ENCODE measurements at regions of chr10 and their contacts with region 1.

Region 1: GRCh38 chr10:35563261-35563891 is 41.8 kb upstream of the GJD4 start:
- DNase-seq: peak in 4 of 5 donors; percentile 50 to 60 (median 54)
- ATAC-seq: peak in 2 of 4 donors; percentile 33 to 42
- H3K4me3 ChIP-seq: no peak overlapping the region
- H3K27ac ChIP-seq: peak overlapping the region in 5 of 12 donors; percentile 9 to 70 (median 52)
- H3K4me1 ChIP-seq: peaks cover 15 to 56% (median 42%) of the 10 kb centered on the region in 12 donors
- H3K27me3 ChIP-seq: no peaks in the 10 kb centered on the region
- CTCF ChIP-seq: peak; percentile 89 to 99 (median 96)
- POLR2A ChIP-seq: no peak

Region 2: GRCh38 chr10:35246770-35247343 is 316.5 kb before region 1 on chr10:
- intact Hi-C with region 1: loop called in 3 of 10 experiments (anchors 5 to 10 kb)
- DNase-seq: no peak
- ATAC-seq: no peak
- H3K4me3 ChIP-seq: no peak overlapping the region
- H3K27ac ChIP-seq: no peak overlapping the region
- H3K4me1 ChIP-seq: no peaks in the 10 kb centered on the region
- H3K27me3 ChIP-seq: no peaks in the 10 kb centered on the region
- CTCF ChIP-seq: no peak
- POLR2A ChIP-seq: no peak

Region 3: GRCh38 chr10:35345383-35345742 is 218.0 kb before region 1 on chr10:
- intact Hi-C with region 1: no loop called
- DNase-seq: no peak
- ATAC-seq: no peak
- H3K4me3 ChIP-seq: no peak overlapping the region
- H3K27ac ChIP-seq: no peak overlapping the region
- H3K4me1 ChIP-seq: peaks cover 13 to 93% (median 79%) of the 10 kb centered on the region in 12 donors
- H3K27me3 ChIP-seq: no peaks in the 10 kb centered on the region
- CTCF ChIP-seq: no peak
- POLR2A ChIP-seq: no peak

Region 4: DNA sequence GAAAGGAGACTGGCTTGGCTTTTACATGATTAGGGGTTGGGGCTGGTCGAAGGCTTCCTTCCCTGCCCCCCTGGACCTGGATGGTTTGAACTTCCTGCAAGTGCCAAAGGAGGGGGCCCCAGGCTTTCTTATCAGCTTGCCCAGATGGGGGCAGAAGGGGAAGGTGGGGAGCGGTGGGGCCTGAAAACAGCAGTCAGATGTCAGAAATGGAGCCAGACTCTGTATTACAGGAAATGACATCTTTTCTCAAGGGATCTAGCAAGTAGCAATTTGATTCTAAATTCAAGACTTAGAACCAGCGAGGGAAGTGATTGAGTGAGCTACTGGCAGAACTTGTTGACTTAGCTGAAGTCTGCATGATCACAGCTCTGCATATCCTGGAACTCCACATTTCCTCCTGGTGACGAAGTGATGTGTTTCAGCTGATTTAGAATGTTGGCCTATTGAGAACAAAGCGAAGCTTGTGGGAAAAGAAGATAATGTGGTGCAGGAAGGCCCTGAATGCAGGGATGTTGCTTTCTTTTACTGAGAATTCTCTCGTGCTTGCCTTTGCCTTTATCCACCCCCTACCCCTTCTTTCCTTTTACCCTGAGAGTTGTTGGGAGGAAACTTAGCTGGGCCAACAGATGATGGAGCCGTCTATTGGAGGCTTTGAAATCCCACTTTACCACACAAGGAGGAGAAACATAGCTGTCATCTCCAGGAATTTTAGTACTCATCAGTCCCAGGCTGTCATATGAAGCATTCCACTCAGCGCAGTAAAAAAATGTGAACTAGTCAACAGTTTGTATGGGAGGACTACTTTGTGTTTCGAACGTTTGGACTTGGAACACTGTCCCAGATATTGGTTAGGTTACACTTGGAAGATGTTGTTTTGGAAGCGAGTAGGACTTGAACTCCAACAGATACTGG is 183.9 kb before region 1 on chr10:
- intact Hi-C with region 1: loop called in 1 of 10 experiments (anchors 10 kb)
- DNase-seq: peak in 4 of 5 donors; percentile 66 to 75 (median 70)
- ATAC-seq: peak; percentile 67 to 92 (median 86)
- H3K4me3 ChIP-seq: peak overlapping the region in 5 of 12 donors; percentile 1 to 24 (median 16)
- H3K27ac ChIP-seq: peak overlapping the region; percentile 66 to 88 (median 79)
- H3K4me1 ChIP-seq: peaks cover 16 to 93% (median 70%) of the 10 kb centered on the region in 12 donors
- H3K27me3 ChIP-seq: no peaks in the 10 kb centered on the region
- CTCF ChIP-seq: peak in 5 of 12 donors; percentile 20 to 48 (median 26)
- POLR2A ChIP-seq: no peak

Region 5: GRCh38 chr10:35462491-35462934 is 100.9 kb before region 1 on chr10:
- intact Hi-C with region 1: loop called in 3 of 10 experiments (anchors 10 kb)
- DNase-seq: no peak
- ATAC-seq: peak; percentile 34 to 75 (median 59)
- H3K4me3 ChIP-seq: no peak overlapping the region
- H3K27ac ChIP-seq: peak overlapping the region in 8 of 12 donors; percentile 14 to 53 (median 49)
- H3K4me1 ChIP-seq: peaks cover 10 to 99% (median 90%) of the 10 kb centered on the region in 12 donors
- H3K27me3 ChIP-seq: no peaks in the 10 kb centered on the region
- CTCF ChIP-seq: no peak
- POLR2A ChIP-seq: no peak

Region 6: DNA sequence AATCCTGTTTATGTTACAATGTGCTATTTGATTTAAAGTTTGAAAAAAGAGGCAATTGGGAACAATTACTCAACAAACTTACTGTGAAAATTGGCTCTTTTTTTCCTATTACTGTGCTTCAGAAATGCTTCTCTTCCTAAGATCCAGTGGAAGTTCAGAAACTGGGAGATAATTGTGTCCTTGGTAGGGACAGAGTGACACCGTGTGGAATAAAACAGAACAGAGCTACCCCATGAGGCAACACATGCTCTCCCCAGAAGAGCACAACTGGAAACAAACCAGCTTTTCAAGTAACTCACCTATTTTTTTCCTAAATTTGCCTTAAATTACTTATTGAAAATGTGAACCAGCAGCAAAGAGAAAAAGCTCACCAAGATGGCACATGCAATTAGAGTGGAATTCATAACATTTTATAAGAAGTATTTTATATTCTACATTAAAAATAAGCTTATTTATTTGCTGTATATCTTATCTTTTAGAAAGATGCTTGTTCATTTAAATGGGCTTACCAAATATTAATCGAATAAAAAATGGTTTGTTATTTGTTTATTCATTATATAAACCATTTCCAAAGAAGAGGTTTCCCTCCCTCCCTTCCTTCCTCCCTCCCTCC is 1216.0 kb after region 1 on chr10:
- intact Hi-C with region 1: loop called in 1 of 10 experiments (anchors 5 kb)
- DNase-seq: peak in 2 of 5 donors; percentile 19 to 26
- ATAC-seq: peak; percentile 88 to 92 (median 92)
- H3K4me3 ChIP-seq: no peak overlapping the region
- H3K27ac ChIP-seq: no peak overlapping the region
- H3K4me1 ChIP-seq: peaks cover 0 to 7% (median 0%) of the 10 kb centered on the region in 12 donors
- H3K27me3 ChIP-seq: no peaks in the 10 kb centered on the region
- CTCF ChIP-seq: peak; percentile 51 to 86 (median 74)
- POLR2A ChIP-seq: no peak

Measured in heart left ventricle (tissue), 16 donors.